Caco-2 (cell line): ENCODE measurements at regions of chr16 and their contacts with region 1.

Region 1: DNA sequence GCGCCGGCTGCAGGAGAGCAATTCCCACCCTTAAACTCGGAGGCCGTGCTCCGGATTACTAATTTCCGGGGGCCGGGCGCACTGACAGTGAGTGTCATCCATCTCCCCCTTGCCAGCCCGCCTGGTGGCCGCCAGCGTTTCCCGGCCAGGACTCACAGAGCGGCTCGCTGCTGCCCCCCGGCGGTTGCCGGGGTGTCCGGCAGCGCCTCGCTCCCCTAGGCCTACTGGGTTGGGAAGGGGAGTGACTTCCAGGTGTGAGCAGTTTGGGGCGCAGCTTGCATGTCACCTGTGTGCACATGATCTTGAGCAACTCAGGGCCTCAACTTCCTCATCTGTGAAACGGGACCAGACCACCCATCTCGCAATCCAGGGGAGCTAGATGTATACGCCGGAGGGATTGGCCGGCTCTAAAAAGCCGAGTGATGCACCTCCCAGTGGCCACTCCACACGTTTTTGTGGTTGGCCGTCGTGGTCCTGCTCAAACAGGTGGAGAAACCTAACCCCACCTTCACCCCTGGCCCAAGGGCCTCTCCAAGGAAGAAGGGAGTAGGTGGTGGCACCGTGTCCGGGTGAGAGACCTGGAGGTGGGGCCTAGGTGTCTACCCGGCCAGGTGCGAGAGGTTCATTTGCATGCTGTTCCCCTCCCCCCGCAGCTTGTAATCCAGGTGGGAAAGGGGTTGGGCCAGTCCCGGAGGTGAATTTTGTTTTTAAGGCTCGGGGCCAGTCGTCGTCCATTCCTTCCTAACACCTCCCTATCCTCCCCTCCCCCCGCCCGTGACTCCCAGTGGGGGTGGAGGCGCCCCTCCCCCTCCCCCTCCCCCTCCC is 2.4 kb upstream of the GSE1 start:
- DNase-seq: peak; percentile 96 to 97
- H3K4me3 ChIP-seq: peak overlapping the region; percentile 95
- H3K4me3 Mint-ChIP-seq: peak overlapping the region; percentile 81
- H3K27ac Mint-ChIP-seq: peak overlapping the region; percentile 91
- H3K4me1 ChIP-seq: peaks cover 37% of the 10 kb centered on the region
- H3K4me1 Mint-ChIP-seq: peaks cover 25% of the 10 kb centered on the region
- H3K27me3 ChIP-seq: no peaks in the 10 kb centered on the region
- H3K27me3 Mint-ChIP-seq: no peaks in the 10 kb centered on the region
- CTCF ChIP-seq: peak; percentile 99

Region 2: DNA sequence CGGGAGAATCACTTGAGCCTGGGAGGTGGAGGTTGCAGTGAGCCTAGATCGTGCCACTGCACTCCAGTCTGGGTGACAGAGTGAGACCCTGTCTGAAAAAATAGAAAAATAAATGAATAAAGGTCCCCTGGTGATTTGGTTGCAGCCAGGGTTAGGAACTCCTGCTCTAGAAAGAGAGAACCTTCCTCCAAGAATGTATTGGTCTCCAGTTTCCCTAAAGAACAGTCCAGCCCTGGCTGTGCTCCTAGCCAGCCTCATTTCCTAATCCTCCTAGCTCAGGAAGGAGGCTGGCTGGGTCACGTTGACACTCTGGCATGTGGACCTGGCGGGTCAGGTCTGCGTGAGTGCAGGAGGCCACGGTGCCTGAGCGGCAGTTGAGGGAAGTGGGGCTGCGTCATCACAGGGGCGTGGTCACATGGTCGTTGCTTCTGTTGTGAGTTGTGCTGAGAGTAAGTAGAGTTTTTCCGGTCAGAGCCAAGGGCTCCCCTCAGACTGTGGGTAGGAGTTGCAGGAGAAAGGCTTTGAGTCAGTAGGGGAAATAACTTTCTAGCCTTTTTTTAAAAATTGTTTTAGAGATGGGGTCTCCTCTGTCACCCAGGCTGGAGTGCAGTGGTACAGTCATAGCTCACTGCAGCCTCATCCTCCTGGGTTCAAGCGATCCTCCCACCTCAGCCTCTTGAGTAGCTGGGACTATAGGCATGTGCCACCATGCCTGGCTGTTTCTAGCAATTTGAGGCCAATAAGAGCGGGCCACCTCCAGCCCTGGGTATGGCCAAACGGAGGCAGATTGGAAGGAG is 304.5 kb before region 1 on chr16:
- CTCF ChIA-PET with region 1: no interaction called
- POLR2A ChIA-PET with region 1: no interaction called
- intact Hi-C with region 1: loop called (anchors 5 kb)
- DNase-seq: peak; percentile 82 to 90
- H3K4me3 ChIP-seq: no peak overlapping the region
- H3K4me3 Mint-ChIP-seq: peak overlapping the region; percentile 44
- H3K27ac Mint-ChIP-seq: peak overlapping the region; percentile 85
- H3K4me1 ChIP-seq: peaks cover 37% of the 10 kb centered on the region
- H3K4me1 Mint-ChIP-seq: peaks cover 8% of the 10 kb centered on the region
- H3K27me3 ChIP-seq: no peaks in the 10 kb centered on the region
- H3K27me3 Mint-ChIP-seq: no peaks in the 10 kb centered on the region
- CTCF ChIP-seq: no peak

Region 3: GRCh38 chr16:85420501-85421337 is 190.0 kb before region 1 on chr16:
- CTCF ChIA-PET with region 1: interaction called, 20 read pairs
- POLR2A ChIA-PET with region 1: interaction called, 4 read pairs
- intact Hi-C with region 1: loop called (anchors 1 kb)
- DNase-seq: peak; percentile 39 to 67
- H3K4me3 ChIP-seq: no peak overlapping the region
- H3K4me3 Mint-ChIP-seq: no peak overlapping the region
- H3K27ac Mint-ChIP-seq: peak overlapping the region; percentile 49
- H3K4me1 ChIP-seq: peaks cover 39% of the 10 kb centered on the region
- H3K4me1 Mint-ChIP-seq: peaks cover 10% of the 10 kb centered on the region
- H3K27me3 ChIP-seq: no peaks in the 10 kb centered on the region
- H3K27me3 Mint-ChIP-seq: no peaks in the 10 kb centered on the region
- CTCF ChIP-seq: peak; percentile 75 to 98

Region 4: DNA sequence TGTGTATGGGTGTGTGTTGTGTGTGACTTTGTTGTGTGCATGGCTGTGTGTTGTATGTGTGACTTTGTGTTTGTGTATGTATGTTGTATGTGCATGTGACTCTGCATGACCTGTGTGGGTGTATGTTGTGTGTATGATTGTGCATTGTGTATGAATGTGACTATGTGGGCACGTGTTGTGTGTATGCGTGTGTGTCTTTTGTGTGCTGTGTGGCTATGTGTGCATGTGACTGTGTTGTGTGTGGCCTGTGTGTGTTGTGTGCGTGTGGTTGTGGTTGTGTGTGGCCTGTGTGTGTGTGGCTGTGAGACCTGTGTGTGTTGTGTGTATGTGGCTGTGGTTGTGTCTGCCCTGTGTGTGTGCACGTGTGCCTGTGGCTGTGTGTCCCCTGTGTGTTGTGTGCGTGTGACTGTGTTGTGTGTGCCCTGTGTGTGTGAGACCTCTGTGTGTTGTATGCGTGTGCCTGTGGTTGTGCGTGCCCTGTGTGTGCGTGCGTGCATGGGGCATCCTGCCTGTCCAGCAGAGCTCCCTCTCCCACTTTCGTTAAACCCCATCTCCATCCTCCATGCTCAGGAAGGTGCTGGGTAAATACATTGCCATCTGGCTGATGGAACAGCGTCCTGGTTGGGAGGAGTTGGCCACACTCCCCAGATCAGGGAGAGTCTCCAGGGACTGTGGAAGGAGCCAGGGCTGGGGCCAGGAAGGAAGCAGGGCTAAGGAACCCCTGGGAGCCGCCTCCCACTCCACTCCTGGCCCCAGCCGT is 87.7 kb before region 1 on chr16:
- CTCF ChIA-PET with region 1: no interaction called
- POLR2A ChIA-PET with region 1: interaction called, 3 read pairs
- intact Hi-C with region 1: loop called (anchors 2 kb)
- DNase-seq: no peak
- H3K4me3 ChIP-seq: no peak overlapping the region
- H3K4me3 Mint-ChIP-seq: peak overlapping the region; percentile 33
- H3K27ac Mint-ChIP-seq: peak overlapping the region; percentile 89
- H3K4me1 ChIP-seq: peaks cover 82% of the 10 kb centered on the region
- H3K4me1 Mint-ChIP-seq: peaks cover 53% of the 10 kb centered on the region
- H3K27me3 ChIP-seq: no peaks in the 10 kb centered on the region
- H3K27me3 Mint-ChIP-seq: no peaks in the 10 kb centered on the region
- CTCF ChIP-seq: no peak

Region 5: GRCh38 chr16:85628645-85629044 is 17.9 kb after region 1 on chr16:
- CTCF ChIA-PET with region 1: interaction called, 14 read pairs
- POLR2A ChIA-PET with region 1: interaction called, 3 read pairs
- intact Hi-C with region 1: no loop called
- DNase-seq: peak in 1 of 2 experiments; percentile 58
- H3K4me3 ChIP-seq: no peak overlapping the region
- H3K4me3 Mint-ChIP-seq: no peak overlapping the region
- H3K27ac Mint-ChIP-seq: peak overlapping the region; percentile 66
- H3K4me1 ChIP-seq: peaks cover 10% of the 10 kb centered on the region; the same call in 1 of the 2 replicates
- H3K4me1 Mint-ChIP-seq: peaks cover 14% of the 10 kb centered on the region
- H3K27me3 ChIP-seq: no peaks in the 10 kb centered on the region
- H3K27me3 Mint-ChIP-seq: no peaks in the 10 kb centered on the region
- CTCF ChIP-seq: peak; percentile 19 to 58

Region 6: GRCh38 chr16:85767569-85767968 is 156.8 kb after region 1 on chr16:
- CTCF ChIA-PET with region 1: no interaction called
- POLR2A ChIA-PET with region 1: no interaction called
- intact Hi-C with region 1: no loop called
- DNase-seq: no peak
- H3K4me3 ChIP-seq: no peak overlapping the region
- H3K4me3 Mint-ChIP-seq: no peak overlapping the region
- H3K27ac Mint-ChIP-seq: peak overlapping the region; percentile 30
- H3K4me1 ChIP-seq: no peaks in the 10 kb centered on the region
- H3K4me1 Mint-ChIP-seq: no peaks in the 10 kb centered on the region
- H3K27me3 ChIP-seq: no peaks in the 10 kb centered on the region; the same call in 1 of the 2 replicates
- H3K27me3 Mint-ChIP-seq: peaks cover 4% of the 10 kb centered on the region
- CTCF ChIP-seq: no peak